Activated T-helper 1 cell treated with anti-CD3 and anti-CD28 coated beads, Interleukin-12 subunit alpha, Interleukin-12 subunit beta, Interleukin-2, Interleukin-4 antibody, amounts not matched to agents 30 ng/mL and 10 ng/mL and 1 ng/mL, durations not matched to agents 14 hours and 24 hours and 36 hours (primary cell): ENCODE measurements at regions of chr7 and their contacts with region 1.

Region 1: DNA sequence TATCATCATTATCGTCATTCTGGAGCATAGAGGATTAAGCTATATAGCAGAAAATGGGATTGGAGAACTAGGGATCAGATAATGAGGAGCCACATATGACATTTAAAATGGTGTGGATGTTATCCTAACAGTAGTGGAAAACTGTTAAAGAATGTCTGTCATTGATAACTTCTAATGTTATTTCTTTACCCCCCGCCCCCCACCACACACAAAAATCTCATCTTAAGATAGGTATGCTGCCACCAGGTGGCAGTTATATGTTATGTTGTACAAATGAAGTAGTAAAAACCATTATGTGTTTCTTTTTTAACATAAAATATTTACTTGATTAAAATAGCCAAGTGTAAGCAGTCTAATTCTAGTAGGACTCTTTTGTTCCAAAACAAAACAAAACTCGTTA is 13.0 kb downstream of the AKAP9 start:
- DNase-seq: no peak
- H3K4me3 Mint-ChIP-seq: no peak overlapping the region
- H3K27ac Mint-ChIP-seq: no peak overlapping the region
- H3K4me1 Mint-ChIP-seq: peaks cover 9% of the 10 kb centered on the region
- H3K27me3 Mint-ChIP-seq: no peaks in the 10 kb centered on the region

Region 2: GRCh38 chr7:91720260-91720937 is 233.2 kb before region 1 on chr7:
- intact Hi-C with region 1: no loop called
- DNase-seq: no peak
- H3K4me3 Mint-ChIP-seq: no peak overlapping the region
- H3K27ac Mint-ChIP-seq: no peak overlapping the region
- H3K4me1 Mint-ChIP-seq: no peaks in the 10 kb centered on the region
- H3K27me3 Mint-ChIP-seq: no peaks in the 10 kb centered on the region

Region 3: GRCh38 chr7:91814189-91814588 is 139.4 kb before region 1 on chr7:
- intact Hi-C with region 1: no loop called
- DNase-seq: no peak
- H3K4me3 Mint-ChIP-seq: no peak overlapping the region
- H3K27ac Mint-ChIP-seq: no peak overlapping the region
- H3K4me1 Mint-ChIP-seq: no peaks in the 10 kb centered on the region
- H3K27me3 Mint-ChIP-seq: no peaks in the 10 kb centered on the region

Region 4: DNA sequence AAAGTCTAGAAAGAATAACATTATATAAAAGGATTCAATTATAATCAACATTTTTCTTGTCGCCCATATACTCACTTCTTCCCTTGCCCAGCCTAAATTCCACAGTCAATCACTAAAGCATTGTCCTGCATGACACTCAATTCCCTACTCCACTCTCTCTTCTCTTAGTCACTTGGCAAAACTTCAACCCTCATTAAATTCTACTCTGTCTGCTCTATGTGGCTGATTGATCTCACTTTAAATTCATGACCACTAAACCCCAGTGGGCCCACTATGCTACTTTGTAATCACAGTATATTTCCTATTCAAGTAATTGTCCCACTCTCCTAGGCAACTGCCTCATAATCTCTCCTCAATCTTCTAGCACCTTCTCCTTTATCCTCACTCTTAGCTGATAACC is 127.2 kb before region 1 on chr7:
- intact Hi-C with region 1: loop called (anchors 1 kb)
- DNase-seq: no peak
- H3K4me3 Mint-ChIP-seq: no peak overlapping the region
- H3K27ac Mint-ChIP-seq: no peak overlapping the region
- H3K4me1 Mint-ChIP-seq: no peaks in the 10 kb centered on the region
- H3K27me3 Mint-ChIP-seq: peaks cover 1% of the 10 kb centered on the region

Region 5: GRCh38 chr7:92034116-92034515 is 80.5 kb after region 1 on chr7:
- intact Hi-C with region 1: no loop called
- DNase-seq: no peak
- H3K4me3 Mint-ChIP-seq: no peak overlapping the region
- H3K27ac Mint-ChIP-seq: no peak overlapping the region
- H3K4me1 Mint-ChIP-seq: no peaks in the 10 kb centered on the region
- H3K27me3 Mint-ChIP-seq: no peaks in the 10 kb centered on the region

Region 6: GRCh38 chr7:92071032-92071431 is 117.4 kb after region 1 on chr7:
- intact Hi-C with region 1: no loop called
- DNase-seq: no peak
- H3K4me3 Mint-ChIP-seq: no peak overlapping the region
- H3K27ac Mint-ChIP-seq: no peak overlapping the region
- H3K4me1 Mint-ChIP-seq: no peaks in the 10 kb centered on the region
- H3K27me3 Mint-ChIP-seq: no peaks in the 10 kb centered on the region